Activated CD4-positive, alpha-beta memory T cell treated with anti-CD3 and anti-CD28 coated beads for 36 hours (primary cell): ENCODE measurements at regions of chr17 and their contacts with region 1.

Region 1: GRCh38 chr17:74457146-74457819 is 9.2 kb upstream of the CD300A start:
- DNase-seq: peak; percentile 80
- H3K4me3 Mint-ChIP-seq: no peak overlapping the region
- H3K27ac Mint-ChIP-seq: no peak overlapping the region
- H3K4me1 Mint-ChIP-seq: peaks cover 23% of the 10 kb centered on the region
- H3K27me3 Mint-ChIP-seq: peaks cover 3% of the 10 kb centered on the region

Region 2: DNA sequence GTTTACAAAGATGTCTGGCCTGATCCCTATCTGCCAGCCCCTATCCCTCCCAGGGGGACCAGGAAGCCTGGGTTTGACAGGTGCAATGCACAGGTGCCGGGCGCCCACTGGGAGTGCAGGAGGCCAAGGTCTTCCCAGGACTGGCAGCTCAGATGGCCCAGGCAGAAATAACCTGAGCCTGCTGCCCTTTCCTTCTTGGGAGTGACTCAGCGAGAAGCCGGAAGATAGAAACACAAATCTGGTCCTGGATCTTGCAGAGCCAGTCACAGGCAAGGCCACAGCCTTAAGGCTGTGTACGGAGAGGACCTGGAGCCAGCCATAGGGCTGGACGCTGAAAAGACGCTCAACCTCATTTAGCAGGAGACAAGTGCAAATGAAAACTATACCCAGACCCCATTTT is 62.3 kb before region 1 on chr17:
- CTCF ChIA-PET with region 1: interaction called, 11 read pairs
- POLR2A ChIA-PET with region 1: no interaction called
- intact Hi-C with region 1: no loop called
- DNase-seq: no peak
- H3K4me3 Mint-ChIP-seq: no peak overlapping the region
- H3K27ac Mint-ChIP-seq: no peak overlapping the region
- H3K4me1 Mint-ChIP-seq: no peaks in the 10 kb centered on the region
- H3K27me3 Mint-ChIP-seq: peaks cover 2% of the 10 kb centered on the region

Region 3: DNA sequence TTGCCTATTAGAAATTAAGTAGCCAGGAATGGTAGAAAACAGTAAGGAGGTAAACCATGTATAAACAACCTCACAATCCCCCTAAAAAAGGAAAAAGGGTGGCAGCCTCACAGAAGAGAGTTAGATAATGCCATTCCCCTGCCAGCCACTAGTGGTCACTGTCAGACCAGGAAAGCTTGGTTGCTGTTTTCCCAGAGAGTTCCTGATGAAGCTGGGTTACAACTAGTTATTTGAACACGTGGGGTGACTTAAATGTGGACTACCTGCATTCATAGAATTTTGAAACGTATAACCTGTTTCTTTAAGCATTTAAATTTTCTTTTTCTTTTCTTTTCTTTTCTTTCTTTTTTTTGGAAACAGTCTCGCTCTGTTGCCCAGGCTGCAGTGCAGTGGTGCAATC is 19.6 kb before region 1 on chr17:
- CTCF ChIA-PET with region 1: interaction called, 39 read pairs
- POLR2A ChIA-PET with region 1: no interaction called
- intact Hi-C with region 1: no loop called
- DNase-seq: peak; percentile 37
- H3K4me3 Mint-ChIP-seq: no peak overlapping the region
- H3K27ac Mint-ChIP-seq: no peak overlapping the region
- H3K4me1 Mint-ChIP-seq: no peaks in the 10 kb centered on the region
- H3K27me3 Mint-ChIP-seq: peaks cover 25% of the 10 kb centered on the region

Region 4: DNA sequence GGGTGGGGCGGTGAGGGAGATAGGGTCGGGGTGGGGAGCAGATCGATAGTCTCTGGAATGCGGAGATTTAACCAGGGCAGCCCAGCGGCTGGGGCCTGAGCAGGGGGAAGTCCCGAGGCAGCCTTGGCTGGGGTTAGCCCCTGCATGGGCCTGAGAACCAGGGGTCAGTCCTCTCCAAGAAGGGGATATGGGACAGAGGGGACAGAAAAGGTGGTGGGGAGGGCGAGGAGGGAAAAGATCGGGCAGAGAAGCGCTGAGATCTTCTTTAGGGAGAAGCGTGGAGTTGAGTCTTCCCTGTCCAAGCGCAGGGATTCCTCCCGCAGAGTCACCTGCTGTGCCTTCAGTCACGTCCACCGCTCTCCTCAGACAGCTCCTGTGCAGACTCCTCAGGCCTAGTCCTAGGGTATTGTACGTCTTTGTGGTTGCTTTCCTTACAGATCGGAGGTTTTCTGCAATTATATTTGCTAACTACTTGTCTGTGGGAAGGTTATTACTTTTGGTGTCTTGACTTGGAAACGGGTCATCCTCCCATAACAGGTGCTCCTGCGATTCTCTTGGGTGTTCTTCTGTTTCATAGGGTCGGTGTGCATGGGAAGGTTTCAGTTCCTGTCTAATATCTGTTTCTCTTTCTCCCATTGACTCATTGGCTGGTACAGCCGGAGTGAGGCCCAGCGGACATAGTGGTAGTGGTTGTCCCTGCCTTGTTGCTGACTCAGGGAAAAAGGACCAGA is 10.1 kb after region 1 on chr17:
- CTCF ChIA-PET with region 1: interaction called, 55 read pairs
- POLR2A ChIA-PET with region 1: no interaction called
- intact Hi-C with region 1: no loop called
- DNase-seq: peak; percentile 48
- H3K4me3 Mint-ChIP-seq: no peak overlapping the region
- H3K27ac Mint-ChIP-seq: peak overlapping the region; percentile 86
- H3K4me1 Mint-ChIP-seq: peaks cover 44% of the 10 kb centered on the region
- H3K27me3 Mint-ChIP-seq: no peaks in the 10 kb centered on the region

Region 5: DNA sequence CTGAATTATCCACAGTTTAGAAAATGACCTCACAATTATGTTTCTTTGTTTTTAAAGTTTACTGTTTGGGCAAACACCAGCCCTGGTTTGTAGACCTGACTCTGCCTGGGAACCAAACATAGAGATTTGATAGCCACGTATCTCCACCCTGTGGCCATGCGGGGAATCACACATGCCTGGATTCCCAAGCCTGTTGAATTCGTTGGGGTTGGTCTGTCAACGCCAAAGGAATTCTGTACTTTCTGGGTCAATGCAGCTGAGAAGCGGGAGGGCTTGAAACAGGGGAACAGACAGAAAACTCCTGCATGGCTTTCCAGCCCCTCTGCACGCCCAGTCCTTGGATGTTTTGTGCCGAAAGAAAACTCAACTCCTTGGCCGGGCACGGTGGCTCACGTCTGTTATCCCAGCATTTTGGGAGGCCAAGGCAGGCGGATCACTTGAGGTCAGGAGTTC is 36.1 kb after region 1 on chr17:
- CTCF ChIA-PET with region 1: interaction called, 28 read pairs
- POLR2A ChIA-PET with region 1: no interaction called
- intact Hi-C with region 1: loop called (anchors 1 kb)
- DNase-seq: peak; percentile 80
- H3K4me3 Mint-ChIP-seq: no peak overlapping the region
- H3K27ac Mint-ChIP-seq: no peak overlapping the region
- H3K4me1 Mint-ChIP-seq: peaks cover 2% of the 10 kb centered on the region
- H3K27me3 Mint-ChIP-seq: peaks cover 2% of the 10 kb centered on the region